PC-3 (cell line): ENCODE measurements at regions of chr16 and their contacts with region 1.

Region 1: DNA sequence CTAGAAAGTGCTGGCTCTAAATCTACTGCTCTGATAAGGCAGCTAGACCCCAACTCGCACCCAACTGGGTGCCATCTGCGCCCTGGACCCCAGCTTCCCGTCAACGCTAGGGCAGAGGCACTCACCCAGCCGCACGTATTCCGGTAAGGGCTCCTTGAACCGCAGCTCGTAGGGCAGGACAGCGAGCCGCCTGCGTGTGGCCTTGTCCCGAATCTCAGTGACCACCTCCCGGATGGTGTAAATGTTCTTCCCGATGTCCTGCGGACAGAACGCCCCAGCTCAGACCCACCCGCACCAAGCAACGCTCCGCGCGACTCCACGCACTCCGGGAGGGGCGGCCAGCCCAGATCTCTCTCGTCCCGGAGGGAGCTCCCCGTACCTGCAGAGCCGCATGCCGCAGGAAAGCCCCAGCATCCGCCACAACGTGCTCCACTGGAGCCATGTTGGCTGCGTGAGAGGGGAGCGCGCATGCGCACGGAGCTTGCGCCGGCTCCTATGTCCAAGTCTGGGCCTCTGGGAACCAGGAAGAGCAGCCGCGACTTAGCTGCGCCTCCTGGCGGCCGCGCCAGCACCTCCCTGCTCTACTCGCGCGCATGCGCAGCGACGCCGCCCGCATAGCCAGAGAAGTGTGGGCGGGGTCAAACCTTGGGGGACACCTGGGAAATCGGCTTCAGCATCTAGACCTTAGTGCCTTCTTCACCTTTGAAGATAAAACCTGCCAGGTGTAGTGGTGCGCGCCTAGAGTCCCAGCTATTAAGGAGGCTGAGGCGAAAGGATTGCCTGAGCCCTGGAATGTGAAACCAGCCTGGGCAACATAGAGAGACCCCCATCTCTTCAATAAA is at the start of gene NOB1:
- DNase-seq: peak; percentile 95
- ATAC-seq: peak; percentile 92
- H3K4me3 ChIP-seq: peak within 1 kb of the TSS; percentile 98
- H3K27ac ChIP-seq: peak within 1 kb of the TSS; percentile 49
- H3K4me1 ChIP-seq: peaks cover 6% of the 10 kb centered on the region
- H3K27me3 ChIP-seq: no peaks in the 10 kb centered on the region
- CTCF ChIP-seq: peak; percentile 82
- total RNA-seq, gene NOB1: 31.9 and 45.1 TPM in 2 replicates

Region 2: GRCh38 chr16:69709456-69710084 is 45.1 kb before region 1 on chr16:
- CTCF ChIA-PET with region 1: interaction called, 3 read pairs
- POLR2A ChIA-PET with region 1: interaction called, 26 read pairs
- intact Hi-C with region 1: loop called (anchors 1 kb)
- DNase-seq: peak; percentile 75
- ATAC-seq: peak; percentile 53
- H3K4me3 ChIP-seq: no peak overlapping the region
- H3K27ac ChIP-seq: no peak overlapping the region
- H3K4me1 ChIP-seq: peaks cover 8% of the 10 kb centered on the region
- H3K27me3 ChIP-seq: no peaks in the 10 kb centered on the region
- CTCF ChIP-seq: peak; percentile 75

Region 3: GRCh38 chr16:69726296-69727060 is 28.2 kb before region 1 on chr16 and contains the start of gene NQO1:
- CTCF ChIA-PET with region 1: interaction called, 4 read pairs
- POLR2A ChIA-PET with region 1: interaction called, 4 read pairs
- intact Hi-C with region 1: loop called (anchors 1 kb)
- DNase-seq: peak; percentile 95
- ATAC-seq: peak; percentile 94
- H3K4me3 ChIP-seq: peak within 1 kb of the TSS; percentile 85
- H3K27ac ChIP-seq: peak within 1 kb of the TSS; percentile 100
- H3K4me1 ChIP-seq: peaks cover 37% of the 10 kb centered on the region
- H3K27me3 ChIP-seq: no peaks in the 10 kb centered on the region
- CTCF ChIP-seq: no peak
- total RNA-seq, gene NQO1: 193 and 251 TPM in 2 replicates

Region 4: GRCh38 chr16:69773260-69773947 is 18.7 kb after region 1 on chr16:
- CTCF ChIA-PET with region 1: no interaction called
- POLR2A ChIA-PET with region 1: no interaction called
- intact Hi-C with region 1: no loop called
- DNase-seq: no peak
- ATAC-seq: no peak
- H3K4me3 ChIP-seq: no peak overlapping the region
- H3K27ac ChIP-seq: no peak overlapping the region
- H3K4me1 ChIP-seq: no peaks in the 10 kb centered on the region
- H3K27me3 ChIP-seq: no peaks in the 10 kb centered on the region
- CTCF ChIP-seq: no peak